Thyroid gland (tissue), 4 donors: ENCODE measurements at regions of chr7 and their contacts with region 1.

Region 1: DNA sequence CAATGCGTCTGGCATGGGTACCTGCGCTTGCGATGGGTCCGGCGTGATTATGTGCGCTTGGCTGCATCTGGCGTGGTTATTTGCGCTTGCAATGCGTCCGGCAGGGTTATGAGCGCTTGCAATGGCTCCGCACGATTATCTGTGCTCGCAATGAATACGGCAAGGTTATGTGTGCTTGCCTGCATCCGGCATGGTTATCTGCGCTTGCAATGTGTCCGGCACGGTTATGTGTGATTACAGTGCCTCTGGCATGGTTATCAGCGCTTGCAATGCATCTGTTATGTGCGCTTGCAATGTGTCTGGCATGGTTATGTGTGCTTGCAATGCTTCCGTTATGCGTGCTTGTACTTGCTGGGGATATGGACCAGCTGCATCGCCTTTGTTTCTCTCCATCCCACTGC is 37.7 kb downstream of the RBAK start:
- DNase-seq: no peak
- H3K4me3 ChIP-seq: no peak overlapping the region
- H3K27ac ChIP-seq: no peak overlapping the region
- H3K4me1 ChIP-seq: peaks cover 0 to 3% of the 10 kb centered on the region in 2 donors
- H3K27me3 ChIP-seq: no peaks in the 10 kb centered on the region
- CTCF ChIP-seq: no peak
- POLR2A ChIP-seq: no peak

Region 2: DNA sequence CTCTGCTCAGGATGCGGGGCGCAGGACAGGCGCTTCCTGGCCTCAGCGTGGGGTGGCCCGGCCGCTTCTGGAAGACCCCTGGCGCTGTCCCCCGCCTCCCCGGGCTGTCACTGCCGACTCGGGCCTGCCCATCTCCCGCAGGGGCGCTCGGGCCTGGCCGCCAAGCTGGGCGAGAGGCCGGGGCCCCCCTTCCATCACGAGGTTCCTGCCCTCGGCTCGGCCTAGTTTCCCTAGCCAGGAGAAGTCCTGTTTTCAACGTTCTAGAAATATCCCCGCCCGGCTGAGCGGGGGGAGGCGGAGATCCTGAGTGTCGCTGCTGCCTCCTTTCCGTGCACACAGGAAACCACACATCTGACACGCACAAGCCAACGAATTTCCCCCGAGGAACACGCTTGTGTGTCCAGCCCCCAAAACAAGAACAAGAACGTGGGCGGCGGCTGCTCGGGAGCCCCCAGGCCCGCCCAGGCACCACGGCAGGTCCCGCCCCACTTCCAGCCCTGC is 274.2 kb before region 1 on chr7:
- intact Hi-C with region 1: loop called (anchors 10 kb)
- DNase-seq: no peak
- H3K4me3 ChIP-seq: no peak overlapping the region
- H3K27ac ChIP-seq: peak overlapping the region in 1 of 3 donors; percentile 27
- H3K4me1 ChIP-seq: no peaks in the 10 kb centered on the region
- H3K27me3 ChIP-seq: no peaks in the 10 kb centered on the region
- CTCF ChIP-seq: no peak
- POLR2A ChIP-seq: no peak

Region 3: GRCh38 chr7:4973728-4974198 is 109.5 kb before region 1 on chr7:
- intact Hi-C with region 1: loop called (anchors 10 kb)
- DNase-seq: peak; percentile 83 to 92
- H3K4me3 ChIP-seq: peak overlapping the region; percentile 26 to 86 (median 68)
- H3K27ac ChIP-seq: peak overlapping the region; percentile 66 to 94 (median 86)
- H3K4me1 ChIP-seq: peaks cover 4 to 5% of the 10 kb centered on the region in 2 donors
- H3K27me3 ChIP-seq: no peaks in the 10 kb centered on the region
- CTCF ChIP-seq: peak; percentile 52 to 88 (median 79)
- POLR2A ChIP-seq: peak in 1 of 2 donors; percentile 82

Region 4: DNA sequence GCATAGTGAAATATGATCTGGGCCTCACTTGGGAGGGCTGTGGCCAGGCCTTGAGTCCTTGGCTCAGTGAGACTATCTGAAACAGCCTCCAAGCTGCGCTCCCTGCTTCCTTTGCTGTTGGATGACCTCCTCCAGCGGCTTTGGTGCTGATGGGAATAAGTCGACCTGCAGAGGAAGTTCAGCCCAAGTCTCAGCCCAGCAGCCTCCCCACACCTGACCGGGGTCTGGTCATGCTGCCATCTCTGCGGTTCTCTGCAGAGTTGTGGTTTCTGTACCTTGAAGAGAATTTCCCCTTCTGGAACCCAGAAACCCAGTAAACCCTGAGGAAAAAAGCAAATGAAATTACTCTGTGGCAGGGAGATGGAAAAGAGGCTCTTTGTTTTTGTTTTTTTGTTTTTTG is 42.3 kb before region 1 on chr7:
- intact Hi-C with region 1: no loop called
- DNase-seq: no peak
- H3K4me3 ChIP-seq: no peak overlapping the region
- H3K27ac ChIP-seq: no peak overlapping the region
- H3K4me1 ChIP-seq: no peaks in the 10 kb centered on the region
- H3K27me3 ChIP-seq: no peaks in the 10 kb centered on the region
- CTCF ChIP-seq: no peak
- POLR2A ChIP-seq: no peak